Mammary epithelial cell (primary cell): ENCODE measurements at regions of chr2 and their contacts with region 1.

Region 1: GRCh38 chr2:101697124-101698013 is at the start of gene MAP4K4:
- DNase-seq: peak; percentile 83
- H3K4me3 ChIP-seq: peak within 1 kb of the TSS; percentile 60 to 85 (median 67)
- H3K27ac ChIP-seq: peak within 1 kb of the TSS; percentile 76
- H3K4me1 ChIP-seq: peaks cover 15% of the 10 kb centered on the region
- H3K27me3 ChIP-seq: no peaks in the 10 kb centered on the region
- CTCF ChIP-seq: peak in 1 of 2 donors; percentile 34
- total RNA-seq, gene MAP4K4: 65.2 to 212 TPM

Region 2: DNA sequence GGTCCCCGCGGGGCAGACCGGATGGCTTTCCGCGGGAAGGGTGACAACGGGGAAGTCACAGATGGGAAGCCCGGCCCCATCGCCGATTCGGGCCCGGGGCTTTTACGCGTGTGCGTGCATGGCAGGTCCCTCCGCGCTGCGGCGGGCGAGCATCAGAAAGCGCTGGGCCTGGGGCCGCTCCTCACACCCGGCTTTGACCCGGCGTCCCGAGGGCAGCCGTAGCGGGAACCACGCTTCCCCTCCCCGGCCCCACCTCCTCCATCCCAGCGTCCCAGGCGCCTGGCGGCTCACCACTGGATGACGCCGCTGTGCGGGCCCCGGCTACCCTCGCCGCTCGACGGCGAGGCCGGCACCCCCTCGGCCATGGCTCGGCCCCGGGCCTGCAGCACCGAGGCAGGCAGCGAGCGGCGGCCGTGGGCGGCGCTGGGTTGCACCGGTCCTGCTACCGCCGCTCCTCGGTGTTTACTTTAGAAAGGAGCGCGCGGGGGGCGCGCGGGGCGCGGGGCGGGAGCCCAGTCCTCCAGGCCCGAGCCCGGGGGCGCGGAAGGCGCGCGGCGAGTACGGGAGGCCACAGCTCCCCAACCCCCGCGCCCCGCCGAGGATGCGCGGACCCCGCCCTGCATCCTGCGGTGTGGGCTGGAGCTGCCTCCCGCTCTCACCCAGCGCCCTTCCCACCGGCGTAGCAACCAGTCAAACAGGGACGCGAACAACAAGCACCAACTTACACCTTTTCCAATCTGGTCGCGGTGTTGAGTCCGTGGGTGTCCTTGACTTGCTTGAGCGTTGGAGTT is 223.3 kb before region 1 on chr2:
- CTCF ChIA-PET with region 1: no interaction called
- dilution Hi-C with region 1: no loop called
- in situ Hi-C with region 1: no loop called
- intact Hi-C with region 1: loop called (anchors 5 kb)
- DNase-seq: peak; percentile 24
- H3K4me3 ChIP-seq: peak overlapping the region; percentile 56 to 59 (median 57)
- H3K27ac ChIP-seq: peak overlapping the region; percentile 37
- H3K4me1 ChIP-seq: peaks cover 14% of the 10 kb centered on the region
- H3K27me3 ChIP-seq: no peaks in the 10 kb centered on the region
- CTCF ChIP-seq: no peak

Region 3: GRCh38 chr2:101630224-101630949 is 67.0 kb before region 1 on chr2:
- CTCF ChIA-PET with region 1: no interaction called
- dilution Hi-C with region 1: no loop called
- in situ Hi-C with region 1: no loop called
- intact Hi-C with region 1: loop called (anchors 1 kb)
- DNase-seq: peak; percentile 99
- H3K4me3 ChIP-seq: no peak overlapping the region
- H3K27ac ChIP-seq: peak overlapping the region; percentile 68
- H3K4me1 ChIP-seq: peaks cover 13% of the 10 kb centered on the region
- H3K27me3 ChIP-seq: no peaks in the 10 kb centered on the region
- CTCF ChIP-seq: no peak

Region 4: DNA sequence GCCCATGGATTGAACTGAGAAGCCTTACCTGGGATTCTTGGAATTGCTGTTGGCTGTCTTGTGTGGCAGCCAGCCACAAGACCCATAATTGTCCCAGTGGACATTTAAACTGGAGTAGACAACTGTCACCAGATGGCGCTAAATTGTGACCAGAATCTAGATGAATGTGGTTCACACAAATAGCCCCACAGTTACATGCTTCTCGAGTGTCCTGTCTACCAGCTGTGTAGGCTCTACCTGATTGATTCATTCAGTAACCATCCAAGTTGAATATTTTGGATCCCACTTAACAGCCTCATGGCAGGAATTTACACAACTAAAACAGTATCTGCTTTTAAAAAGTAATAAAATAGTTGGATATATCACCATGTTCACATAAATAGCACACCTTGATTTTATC is 73.4 kb after region 1 on chr2:
- CTCF ChIA-PET with region 1: no interaction called
- dilution Hi-C with region 1: no loop called
- in situ Hi-C with region 1: no loop called
- intact Hi-C with region 1: loop called (anchors 5 kb)
- DNase-seq: peak; percentile 57
- H3K4me3 ChIP-seq: no peak overlapping the region
- H3K27ac ChIP-seq: no peak overlapping the region
- H3K4me1 ChIP-seq: peaks cover 55% of the 10 kb centered on the region
- H3K27me3 ChIP-seq: no peaks in the 10 kb centered on the region
- CTCF ChIP-seq: peak; percentile 24 to 47

Region 5: DNA sequence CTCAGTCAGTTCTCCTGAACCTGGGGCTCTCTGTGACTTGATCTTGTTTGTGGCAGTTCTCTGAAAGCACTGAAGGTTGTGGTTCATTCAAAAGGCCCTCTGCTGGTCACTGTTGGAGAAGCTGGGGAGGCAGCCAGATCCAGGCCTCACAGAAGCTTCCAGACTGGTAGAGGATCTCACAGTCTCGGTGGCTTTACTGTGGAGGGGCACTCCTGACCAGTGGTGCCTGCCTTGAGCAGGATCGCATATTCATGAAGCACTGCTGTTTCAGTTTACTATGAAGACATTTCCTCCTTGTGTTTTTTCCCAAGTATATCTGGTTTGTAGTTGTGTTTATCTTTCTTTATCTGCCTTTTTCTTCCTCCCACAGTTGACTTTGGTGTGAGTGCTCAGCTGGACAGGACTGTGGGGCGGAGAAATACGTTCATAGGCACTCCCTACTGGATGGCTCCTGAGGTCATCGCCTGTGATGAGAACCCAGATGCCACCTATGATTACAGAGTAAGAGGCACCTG is 134.0 kb after region 1 on chr2:
- CTCF ChIA-PET with region 1: interaction called, 3 read pairs
- dilution Hi-C with region 1: no loop called
- in situ Hi-C with region 1: loop called in 1 of 2 experiments (anchors 10 kb)
- intact Hi-C with region 1: loop called (anchors 1 kb)
- DNase-seq: peak; percentile 64
- H3K4me3 ChIP-seq: no peak overlapping the region
- H3K27ac ChIP-seq: peak overlapping the region; percentile 58
- H3K4me1 ChIP-seq: peaks cover 52% of the 10 kb centered on the region
- H3K27me3 ChIP-seq: no peaks in the 10 kb centered on the region
- CTCF ChIP-seq: peak; percentile 66 to 82